Naive thymus-derived CD4-positive, alpha-beta T cell (primary cell): ENCODE measurements at regions of chr7 and their contacts with region 1.

Region 1: GRCh38 chr7:138886501-138886917 is 88.5 kb upstream of the ATP6V0A4 start:
- DNase-seq: peak in 7 of 9 donors; percentile 63 to 82 (median 78)
- ATAC-seq: peak; percentile 91
- H3K4me3 ChIP-seq: no peak overlapping the region
- H3K4me3 Mint-ChIP-seq: peak overlapping the region in 7 of 10 donors; percentile 41 to 67 (median 60)
- H3K27ac ChIP-seq: no peak overlapping the region
- H3K27ac Mint-ChIP-seq: peak overlapping the region; percentile 9 to 88 (median 61)
- H3K4me1 ChIP-seq: peaks cover 3 to 4% of the 10 kb centered on the region in 2 donors
- H3K4me1 Mint-ChIP-seq: peaks cover 3 to 32% (median 23%) of the 10 kb centered on the region in 7 donors
- H3K27me3 ChIP-seq: no peaks in the 10 kb centered on the region
- H3K27me3 Mint-ChIP-seq: peaks cover 0 to 13% (median 0%) of the 10 kb centered on the region in 5 donors

Region 2: GRCh38 chr7:138835087-138835486 is 51.4 kb before region 1 on chr7:
- CTCF ChIA-PET with region 1: no interaction called
- POLR2A ChIA-PET with region 1: no interaction called
- intact Hi-C with region 1: no loop called
- DNase-seq: no peak
- ATAC-seq: no peak
- H3K4me3 ChIP-seq: no peak overlapping the region
- H3K4me3 Mint-ChIP-seq: no peak overlapping the region
- H3K27ac ChIP-seq: no peak overlapping the region
- H3K27ac Mint-ChIP-seq: no peak overlapping the region
- H3K4me1 ChIP-seq: no peaks in the 10 kb centered on the region
- H3K4me1 Mint-ChIP-seq: peaks cover 0 to 7% (median 3%) of the 10 kb centered on the region in 7 donors
- H3K27me3 ChIP-seq: no peaks in the 10 kb centered on the region
- H3K27me3 Mint-ChIP-seq: peaks cover 6 to 32% (median 8%) of the 10 kb centered on the region in 5 donors

Region 3: DNA sequence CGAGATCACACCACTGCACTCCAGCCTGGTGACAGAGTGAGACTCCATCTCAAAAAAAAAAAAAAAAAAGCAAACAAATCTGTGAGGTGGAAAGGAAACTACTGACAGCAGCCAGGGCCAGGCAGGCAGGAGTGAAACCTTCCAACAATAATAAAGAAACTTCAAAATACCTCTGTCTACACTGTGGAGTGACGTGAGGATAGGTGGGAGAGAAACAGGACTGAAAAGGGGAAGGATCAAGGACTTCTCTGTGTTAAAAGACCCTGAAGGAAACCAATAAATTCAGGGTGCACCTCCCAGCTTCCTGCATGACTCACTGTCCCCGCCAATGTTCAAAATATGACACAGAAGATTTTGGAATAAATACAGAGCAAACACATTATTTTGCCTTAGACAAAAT is 11.7 kb after region 1 on chr7:
- CTCF ChIA-PET with region 1: interaction called, 24 read pairs
- POLR2A ChIA-PET with region 1: interaction called, 7 read pairs
- intact Hi-C with region 1: loop called (anchors 1 kb)
- DNase-seq: peak in 4 of 9 donors; percentile 14 to 36 (median 18)
- ATAC-seq: peak; percentile 49
- H3K4me3 ChIP-seq: no peak overlapping the region
- H3K4me3 Mint-ChIP-seq: peak overlapping the region in 7 of 10 donors; percentile 12 to 56 (median 27)
- H3K27ac ChIP-seq: no peak overlapping the region
- H3K27ac Mint-ChIP-seq: peak overlapping the region in 7 of 9 donors; percentile 16 to 75 (median 46)
- H3K4me1 ChIP-seq: peaks cover 9 to 26% of the 10 kb centered on the region in 2 donors
- H3K4me1 Mint-ChIP-seq: peaks cover 20 to 53% (median 48%) of the 10 kb centered on the region in 7 donors
- H3K27me3 ChIP-seq: no peaks in the 10 kb centered on the region
- H3K27me3 Mint-ChIP-seq: peaks cover 0 to 66% (median 0%) of the 10 kb centered on the region in 5 donors

Region 4: GRCh38 chr7:138981332-138982203 is 95.1 kb after region 1 on chr7 and contains the start of gene KIAA1549:
- CTCF ChIA-PET with region 1: interaction called, 29 read pairs
- POLR2A ChIA-PET with region 1: interaction called, 6 read pairs
- intact Hi-C with region 1: loop called (anchors 1 kb)
- DNase-seq: peak in 8 of 9 donors; percentile 17 to 75 (median 26)
- ATAC-seq: peak; percentile 81
- H3K4me3 ChIP-seq: peak within 1 kb of the TSS; percentile 37
- H3K4me3 Mint-ChIP-seq: peak within 1 kb of the TSS; percentile 83 to 98 (median 90)
- H3K27ac ChIP-seq: no peak within 1 kb of the TSS
- H3K27ac Mint-ChIP-seq: peak within 1 kb of the TSS in 7 of 9 donors; percentile 12 to 82 (median 63)
- H3K4me1 ChIP-seq: peaks cover 5 to 6% of the 10 kb centered on the region in 2 donors
- H3K4me1 Mint-ChIP-seq: peaks cover 10 to 18% (median 13%) of the 10 kb centered on the region in 7 donors
- H3K27me3 ChIP-seq: peaks cover 10 to 13% of the 10 kb centered on the region in 2 donors
- H3K27me3 Mint-ChIP-seq: peaks cover 25 to 49% (median 35%) of the 10 kb centered on the region in 5 donors
- total RNA-seq, gene KIAA1549: 0.16 to 0.56 (median 0.25) TPM in 4 of 5 experiments, not detected in the other

Region 5: GRCh38 chr7:139035586-139036353 is 149.3 kb after region 1 on chr7 and contains the start of gene ZC3HAV1L:
- CTCF ChIA-PET with region 1: no interaction called
- POLR2A ChIA-PET with region 1: no interaction called
- intact Hi-C with region 1: loop called (anchors 5 to 10 kb)
- DNase-seq: peak in 4 of 9 donors; percentile 25 to 77 (median 29)
- ATAC-seq: peak; percentile 80
- H3K4me3 ChIP-seq: peak within 1 kb of the TSS; percentile 55
- H3K4me3 Mint-ChIP-seq: peak within 1 kb of the TSS; percentile 62 to 91 (median 80)
- H3K27ac ChIP-seq: no peak within 1 kb of the TSS
- H3K27ac Mint-ChIP-seq: peak within 1 kb of the TSS in 3 of 9 donors; percentile 45 to 86 (median 53)
- H3K4me1 ChIP-seq: peaks cover 0 to 6% of the 10 kb centered on the region in 2 donors
- H3K4me1 Mint-ChIP-seq: peaks cover 7 to 43% (median 14%) of the 10 kb centered on the region in 7 donors
- H3K27me3 ChIP-seq: no peaks in the 10 kb centered on the region
- H3K27me3 Mint-ChIP-seq: no peaks in the 10 kb centered on the region
- total RNA-seq, gene ZC3HAV1L: 0.35 to 26.7 (median 0.78) TPM

Region 6: GRCh38 chr7:139124084-139124914 is 237.8 kb after region 1 on chr7:
- CTCF ChIA-PET with region 1: interaction called, 37 read pairs
- POLR2A ChIA-PET with region 1: interaction called, 6 read pairs
- intact Hi-C with region 1: loop called (anchors 1 to 2 kb)
- DNase-seq: no peak
- ATAC-seq: no peak
- H3K4me3 ChIP-seq: no peak overlapping the region
- H3K4me3 Mint-ChIP-seq: peak overlapping the region in 2 of 10 donors; percentile 3 to 31
- H3K27ac ChIP-seq: no peak overlapping the region
- H3K27ac Mint-ChIP-seq: peak overlapping the region in 1 of 9 donors; percentile 43
- H3K4me1 ChIP-seq: peaks cover 1 to 20% of the 10 kb centered on the region in 2 donors
- H3K4me1 Mint-ChIP-seq: peaks cover 7 to 40% (median 25%) of the 10 kb centered on the region in 7 donors
- H3K27me3 ChIP-seq: no peaks in the 10 kb centered on the region
- H3K27me3 Mint-ChIP-seq: peaks cover 0 to 7% (median 0%) of the 10 kb centered on the region in 5 donors

Region 7: DNA sequence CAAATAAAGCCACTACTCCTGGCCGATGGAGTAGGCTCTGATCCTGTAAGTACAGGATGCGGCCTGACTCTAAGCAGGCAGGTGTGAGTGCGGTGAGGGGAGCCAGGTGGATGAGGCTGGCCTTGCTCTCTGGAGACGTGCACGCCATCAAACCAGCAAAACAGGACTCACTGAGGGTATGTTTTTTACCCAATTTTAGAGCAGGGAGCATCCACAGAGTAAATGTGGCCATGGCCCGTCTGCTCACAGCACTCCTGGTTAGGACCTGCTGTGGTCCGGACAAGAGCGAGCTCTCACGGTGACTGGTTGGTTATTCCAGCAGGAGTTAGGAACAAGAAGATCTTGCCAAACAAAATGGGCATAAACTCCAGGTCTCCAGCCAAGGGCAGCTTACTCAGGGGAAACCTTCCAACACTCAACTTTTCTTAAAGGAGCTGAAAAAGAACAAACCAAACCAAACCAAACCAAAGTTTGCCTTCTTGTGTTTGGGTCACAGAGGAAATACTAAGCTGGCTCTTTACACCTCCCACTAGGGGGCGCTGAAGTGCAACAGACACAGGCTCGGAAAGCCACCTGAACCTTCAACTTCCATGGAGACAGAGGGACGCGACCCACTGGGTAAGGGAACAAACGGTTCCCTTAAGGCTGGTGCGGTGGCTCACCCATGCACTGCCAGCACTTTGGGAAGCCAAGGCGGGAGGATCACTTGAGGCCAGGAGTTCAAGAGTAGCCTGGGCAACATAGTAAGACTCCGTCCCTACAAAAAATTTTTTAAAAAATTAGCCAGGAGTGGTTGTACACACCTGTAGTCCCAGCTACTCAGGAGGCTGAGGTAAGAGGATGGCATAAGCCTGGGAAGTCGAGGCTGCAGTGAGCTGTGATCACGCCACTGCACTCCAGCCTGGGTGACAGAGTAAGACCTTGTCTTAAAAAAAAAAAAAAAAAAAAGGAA is 759.3 kb after region 1 on chr7:
- CTCF ChIA-PET with region 1: no interaction called
- POLR2A ChIA-PET with region 1: no interaction called
- intact Hi-C with region 1: no loop called
- DNase-seq: peak; percentile 72 to 93 (median 80)
- ATAC-seq: peak; percentile 73
- H3K4me3 ChIP-seq: no peak overlapping the region
- H3K4me3 Mint-ChIP-seq: peak overlapping the region in 8 of 10 donors; percentile 44 to 77 (median 61)
- H3K27ac ChIP-seq: no peak overlapping the region
- H3K27ac Mint-ChIP-seq: peak overlapping the region in 7 of 9 donors; percentile 46 to 92 (median 64)
- H3K4me1 ChIP-seq: peaks cover 0 to 78% of the 10 kb centered on the region in 2 donors
- H3K4me1 Mint-ChIP-seq: peaks cover 61 to 96% (median 87%) of the 10 kb centered on the region in 7 donors
- H3K27me3 ChIP-seq: no peaks in the 10 kb centered on the region
- H3K27me3 Mint-ChIP-seq: no peaks in the 10 kb centered on the region

Region 8: DNA sequence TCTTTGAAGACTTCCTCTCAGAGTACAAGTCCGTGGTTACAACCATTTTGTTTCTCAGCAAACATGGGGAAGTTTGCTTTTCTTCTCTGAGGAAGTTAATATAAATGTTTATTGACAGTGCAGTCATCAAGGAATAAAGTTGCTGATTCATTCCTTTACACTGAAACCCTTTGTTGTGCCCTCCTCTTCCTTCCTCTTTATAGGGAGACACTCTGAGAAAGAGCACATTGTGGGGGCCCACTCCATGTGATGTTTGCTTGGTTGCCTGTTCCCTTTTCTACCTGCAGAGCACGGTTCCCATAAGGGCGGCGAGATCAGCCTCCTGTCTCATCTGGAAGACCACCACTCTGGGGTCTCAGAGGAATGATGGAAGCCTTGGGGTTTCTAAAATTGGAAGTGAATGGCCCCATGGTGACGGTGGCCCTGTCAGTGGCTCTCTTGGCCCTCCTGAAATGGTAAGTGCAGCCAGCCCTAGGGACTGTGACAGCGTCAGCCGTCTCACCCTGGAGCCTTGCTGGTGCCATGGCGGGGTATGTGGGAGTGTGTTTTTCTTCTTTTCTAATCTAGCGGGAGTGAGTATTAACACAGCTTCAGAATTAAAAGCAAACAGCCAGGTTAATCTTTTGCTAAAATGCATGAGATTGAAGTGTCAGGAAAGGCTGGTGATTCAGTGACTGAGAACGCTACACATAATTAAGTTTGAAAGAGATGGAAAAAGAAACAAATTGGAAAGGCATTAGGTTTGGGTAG is 942.7 kb after region 1 on chr7 and contains the start of gene TBXAS1:
- CTCF ChIA-PET with region 1: no interaction called
- POLR2A ChIA-PET with region 1: no interaction called
- intact Hi-C with region 1: no loop called
- DNase-seq: peak in 3 of 9 donors; percentile 6 to 14 (median 12)
- ATAC-seq: peak; percentile 87
- H3K4me3 ChIP-seq: no peak within 1 kb of the TSS
- H3K4me3 Mint-ChIP-seq: peak within 1 kb of the TSS; percentile 19 to 78 (median 68)
- H3K27ac ChIP-seq: no peak within 1 kb of the TSS
- H3K27ac Mint-ChIP-seq: peak within 1 kb of the TSS in 8 of 9 donors; percentile 67 to 90 (median 83)
- H3K4me1 ChIP-seq: peaks cover 0 to 8% of the 10 kb centered on the region in 2 donors
- H3K4me1 Mint-ChIP-seq: peaks cover 10 to 30% (median 26%) of the 10 kb centered on the region in 7 donors
- H3K27me3 ChIP-seq: no peaks in the 10 kb centered on the region
- H3K27me3 Mint-ChIP-seq: peaks cover 0 to 16% (median 5%) of the 10 kb centered on the region in 5 donors
- total RNA-seq, gene TBXAS1: 2.6 to 70.9 (median 6.7) TPM